ENCODE measurements at regions of chr7 and their contacts with region 1.

Region 1: GRCh38 chr7:114865564-114865963 is 56.3 kb upstream of the MDFIC start:
- DNase-seq: peak; percentile 53
- H3K4me3 ChIP-seq: no peak overlapping the region
- H3K27ac ChIP-seq: no peak overlapping the region
- H3K4me1 ChIP-seq: no peaks in the 10 kb centered on the region
- H3K27me3 ChIP-seq: no peaks in the 10 kb centered on the region
- CTCF ChIP-seq: peak; percentile 55 to 67 (median 58)
- EP300 ChIP-seq: no peak
- POLR2A ChIP-seq: no peak

Region 2: GRCh38 chr7:114243019-114243507 is 622.5 kb before region 1 on chr7:
- in situ Hi-C with region 1: no loop called
- intact Hi-C with region 1: no loop called
- DNase-seq: no peak
- H3K4me3 ChIP-seq: no peak overlapping the region
- H3K27ac ChIP-seq: no peak overlapping the region
- H3K4me1 ChIP-seq: peaks cover 0 to 10% (median 0%) of the 10 kb centered on the region in 4 donors
- H3K27me3 ChIP-seq: no peaks in the 10 kb centered on the region
- CTCF ChIP-seq: no peak
- EP300 ChIP-seq: no peak
- POLR2A ChIP-seq: no peak

Region 3: GRCh38 chr7:114889646-114890285 is 24.2 kb after region 1 on chr7:
- in situ Hi-C with region 1: no loop called
- intact Hi-C with region 1: loop called (anchors 2 kb)
- DNase-seq: no peak
- H3K4me3 ChIP-seq: no peak overlapping the region
- H3K27ac ChIP-seq: no peak overlapping the region
- H3K4me1 ChIP-seq: peaks cover 0 to 7% (median 0%) of the 10 kb centered on the region in 4 donors
- H3K27me3 ChIP-seq: no peaks in the 10 kb centered on the region
- CTCF ChIP-seq: no peak
- EP300 ChIP-seq: no peak
- POLR2A ChIP-seq: no peak

Region 4: GRCh38 chr7:114939484-114940097 is 74.0 kb after region 1 on chr7:
- in situ Hi-C with region 1: no loop called
- intact Hi-C with region 1: no loop called
- DNase-seq: no peak
- H3K4me3 ChIP-seq: no peak overlapping the region
- H3K27ac ChIP-seq: no peak overlapping the region
- H3K4me1 ChIP-seq: peaks cover 0 to 27% (median 6%) of the 10 kb centered on the region in 4 donors
- H3K27me3 ChIP-seq: no peaks in the 10 kb centered on the region
- CTCF ChIP-seq: no peak
- EP300 ChIP-seq: no peak
- POLR2A ChIP-seq: no peak

Region 5: GRCh38 chr7:115217373-115217772 is 351.8 kb after region 1 on chr7:
- in situ Hi-C with region 1: loop called in 2 of 4 experiments (anchors 10 to 25 kb)
- intact Hi-C with region 1: no loop called
- DNase-seq: no peak
- H3K4me3 ChIP-seq: no peak overlapping the region
- H3K27ac ChIP-seq: no peak overlapping the region
- H3K4me1 ChIP-seq: no peaks in the 10 kb centered on the region
- H3K27me3 ChIP-seq: no peaks in the 10 kb centered on the region
- CTCF ChIP-seq: peak in 3 of 5 experiments; percentile 15 to 24 (median 18)
- EP300 ChIP-seq: no peak
- POLR2A ChIP-seq: no peak

Region 6: GRCh38 chr7:115679976-115680375 is 814.4 kb after region 1 on chr7:
- in situ Hi-C with region 1: loop called in 1 of 4 experiments (anchors 25 kb)
- intact Hi-C with region 1: no loop called
- DNase-seq: peak; percentile 10
- H3K4me3 ChIP-seq: no peak overlapping the region
- H3K27ac ChIP-seq: no peak overlapping the region
- H3K4me1 ChIP-seq: peaks cover 0 to 51% (median 17%) of the 10 kb centered on the region in 4 donors
- H3K27me3 ChIP-seq: no peaks in the 10 kb centered on the region
- CTCF ChIP-seq: peak; percentile 11 to 33 (median 21)
- EP300 ChIP-seq: no peak
- POLR2A ChIP-seq: no peak

Region 7: GRCh38 chr7:115707258-115708012 is 841.9 kb after region 1 on chr7:
- in situ Hi-C with region 1: loop called in 1 of 4 experiments (anchors 25 kb)
- intact Hi-C with region 1: no loop called
- DNase-seq: peak; percentile 14
- H3K4me3 ChIP-seq: no peak overlapping the region
- H3K27ac ChIP-seq: no peak overlapping the region
- H3K4me1 ChIP-seq: peaks cover 0 to 4% (median 0%) of the 10 kb centered on the region in 4 donors
- H3K27me3 ChIP-seq: no peaks in the 10 kb centered on the region
- CTCF ChIP-seq: peak in 4 of 5 experiments; percentile 19 to 38 (median 33)
- EP300 ChIP-seq: no peak
- POLR2A ChIP-seq: no peak

Region 8: DNA sequence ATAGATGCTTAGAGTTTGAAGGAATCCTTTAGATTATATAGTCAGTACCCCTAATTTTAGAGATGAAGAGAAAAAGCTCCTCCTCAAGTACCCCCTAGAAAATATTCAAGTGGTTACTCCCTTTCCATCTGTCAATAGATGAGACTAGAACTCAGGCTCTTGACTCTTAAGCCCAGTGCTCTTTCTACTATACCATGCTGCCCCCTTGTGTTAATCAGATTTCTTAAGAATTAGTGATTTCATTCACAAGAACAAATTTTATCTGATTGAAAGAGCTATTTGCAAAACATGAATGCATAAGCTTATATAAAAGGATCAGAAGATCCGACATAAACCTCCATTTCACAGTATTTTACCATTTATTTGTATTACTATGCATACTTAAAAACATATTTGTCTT is 985.7 kb after region 1 on chr7:
- in situ Hi-C with region 1: loop called in 1 of 4 experiments (anchors 25 kb)
- intact Hi-C with region 1: no loop called
- DNase-seq: no peak
- H3K4me3 ChIP-seq: no peak overlapping the region
- H3K27ac ChIP-seq: no peak overlapping the region
- H3K4me1 ChIP-seq: no peaks in the 10 kb centered on the region
- H3K27me3 ChIP-seq: no peaks in the 10 kb centered on the region
- CTCF ChIP-seq: peak; percentile 17 to 27 (median 24)
- EP300 ChIP-seq: no peak
- POLR2A ChIP-seq: no peak

Measured in transverse colon (tissue), 4 donors.